ENCODE measurements at regions of chr12 and their contacts with region 1.

Region 1: DNA sequence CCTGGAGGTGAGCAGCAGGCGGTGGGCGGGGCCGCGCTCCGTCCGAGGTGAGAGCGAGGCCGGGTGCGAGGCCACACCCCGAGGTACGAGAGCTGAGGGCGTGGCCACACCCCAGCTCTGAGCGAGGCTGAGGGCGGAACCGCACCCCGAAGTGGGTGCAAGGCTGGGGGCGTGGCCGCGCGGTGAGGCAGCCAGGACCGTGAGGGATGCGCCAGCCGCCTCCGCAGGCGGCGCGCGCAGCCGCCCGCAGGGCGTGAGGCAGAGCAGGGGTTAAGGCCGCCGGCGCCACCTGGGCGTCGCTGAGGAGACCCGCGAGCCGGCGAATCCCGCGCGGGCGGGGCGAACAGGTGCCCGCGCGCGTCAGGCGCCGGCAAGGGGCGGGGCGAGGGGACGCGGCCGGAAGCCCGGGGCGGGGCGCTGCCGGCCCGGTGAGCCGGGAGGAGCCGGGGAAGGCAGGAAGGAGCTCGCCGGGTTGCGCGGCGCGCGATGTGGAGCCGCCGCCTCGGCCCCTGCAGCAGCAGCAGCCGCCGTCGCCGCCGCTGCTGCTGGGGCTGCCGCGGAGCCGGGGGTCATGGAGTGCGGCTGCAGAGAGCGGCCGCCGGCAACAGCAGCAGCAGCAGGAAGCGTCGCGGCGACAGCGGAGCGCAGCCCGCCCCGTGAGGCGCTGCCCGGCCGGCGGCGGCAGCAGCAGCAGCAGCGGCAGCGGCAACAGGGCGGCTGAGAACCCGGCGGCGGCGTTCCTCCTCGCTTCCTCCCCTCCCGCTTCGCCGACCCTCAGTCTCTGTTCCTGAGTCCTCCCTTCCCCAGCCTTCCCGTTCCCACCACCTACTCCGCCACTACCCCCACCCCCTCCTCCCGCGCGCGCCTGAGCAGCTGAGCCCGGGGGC is at the start of gene BICDL1:
- DNase-seq: peak; percentile 87
- H3K4me3 ChIP-seq: peak within 1 kb of the TSS; percentile 61
- H3K27ac ChIP-seq: no peak within 1 kb of the TSS
- H3K4me1 ChIP-seq: no peaks in the 10 kb centered on the region
- H3K27me3 ChIP-seq: peaks cover 46% of the 10 kb centered on the region
- CTCF ChIP-seq: 0 out of 2 replicates have a peak, but pooled peaks have one; percentile 0
- total RNA-seq, gene BICDL1: 1.0 and 2.4 TPM in 2 replicates

Region 2: DNA sequence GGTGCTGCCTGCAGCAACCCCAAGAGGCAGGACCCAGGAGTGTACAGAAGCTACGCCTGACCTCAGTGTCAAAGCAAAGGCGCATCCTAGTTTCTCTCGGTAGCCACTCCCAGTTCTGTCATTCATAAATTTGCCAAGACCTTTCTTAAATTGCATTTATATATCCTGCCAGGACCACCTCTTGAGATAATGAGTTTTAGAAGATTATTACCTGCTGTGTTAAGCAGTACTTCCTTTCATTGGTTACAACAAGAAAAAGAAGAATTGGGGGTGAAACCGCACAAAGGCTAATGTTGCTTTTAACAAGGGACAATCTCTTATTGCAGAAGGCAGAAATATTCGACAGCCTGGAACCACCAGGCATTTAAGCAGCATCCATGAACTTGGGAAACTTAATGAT is 169.7 kb before region 1 on chr12:
- CTCF ChIA-PET with region 1: no interaction called
- POLR2A ChIA-PET with region 1: no interaction called
- intact Hi-C with region 1: no loop called
- DNase-seq: peak; percentile 90
- H3K4me3 ChIP-seq: no peak overlapping the region
- H3K27ac ChIP-seq: no peak overlapping the region
- H3K4me1 ChIP-seq: peaks cover 22% of the 10 kb centered on the region
- H3K27me3 ChIP-seq: no peaks in the 10 kb centered on the region
- CTCF ChIP-seq: no peak

Region 3: GRCh38 chr12:119949145-119949544 is 39.9 kb before region 1 on chr12:
- CTCF ChIA-PET with region 1: no interaction called
- POLR2A ChIA-PET with region 1: no interaction called
- intact Hi-C with region 1: no loop called
- DNase-seq: no peak
- H3K4me3 ChIP-seq: no peak overlapping the region
- H3K27ac ChIP-seq: no peak overlapping the region
- H3K4me1 ChIP-seq: no peaks in the 10 kb centered on the region
- H3K27me3 ChIP-seq: no peaks in the 10 kb centered on the region
- CTCF ChIP-seq: no peak

Region 4: GRCh38 chr12:120086801-120087621 is 98.0 kb after region 1 on chr12:
- CTCF ChIA-PET with region 1: no interaction called
- POLR2A ChIA-PET with region 1: no interaction called
- intact Hi-C with region 1: loop called (anchors 2 kb)
- DNase-seq: peak; percentile 100
- H3K4me3 ChIP-seq: peak overlapping the region; percentile 43
- H3K27ac ChIP-seq: peak overlapping the region; percentile 69
- H3K4me1 ChIP-seq: peaks cover 35% of the 10 kb centered on the region
- H3K27me3 ChIP-seq: no peaks in the 10 kb centered on the region
- CTCF ChIP-seq: peak; percentile 99

Measured in A673 (cell line).